A673 (cell line): ENCODE measurements at regions of chr15 and their contacts with region 1.

Region 1: GRCh38 chr15:78638658-78639314 is 2.2 kb downstream of the CHRNB4 start:
- DNase-seq: peak; percentile 68
- H3K4me3 ChIP-seq: no peak overlapping the region
- H3K27ac ChIP-seq: no peak overlapping the region
- H3K4me1 ChIP-seq: no peaks in the 10 kb centered on the region
- H3K27me3 ChIP-seq: peaks cover 72% of the 10 kb centered on the region
- CTCF ChIP-seq: peak; percentile 71

Region 2: GRCh38 chr15:78035321-78035751 is 603.5 kb before region 1 on chr15:
- CTCF ChIA-PET with region 1: no interaction called
- POLR2A ChIA-PET with region 1: no interaction called
- intact Hi-C with region 1: no loop called
- DNase-seq: no peak
- H3K4me3 ChIP-seq: no peak overlapping the region
- H3K27ac ChIP-seq: no peak overlapping the region
- H3K4me1 ChIP-seq: no peaks in the 10 kb centered on the region
- H3K27me3 ChIP-seq: no peaks in the 10 kb centered on the region
- CTCF ChIP-seq: no peak

Region 3: GRCh38 chr15:78469031-78469430 is 169.8 kb before region 1 on chr15:
- CTCF ChIA-PET with region 1: no interaction called
- POLR2A ChIA-PET with region 1: no interaction called
- intact Hi-C with region 1: no loop called
- DNase-seq: no peak
- H3K4me3 ChIP-seq: no peak overlapping the region
- H3K27ac ChIP-seq: no peak overlapping the region
- H3K4me1 ChIP-seq: no peaks in the 10 kb centered on the region
- H3K27me3 ChIP-seq: no peaks in the 10 kb centered on the region
- CTCF ChIP-seq: no peak

Region 4: DNA sequence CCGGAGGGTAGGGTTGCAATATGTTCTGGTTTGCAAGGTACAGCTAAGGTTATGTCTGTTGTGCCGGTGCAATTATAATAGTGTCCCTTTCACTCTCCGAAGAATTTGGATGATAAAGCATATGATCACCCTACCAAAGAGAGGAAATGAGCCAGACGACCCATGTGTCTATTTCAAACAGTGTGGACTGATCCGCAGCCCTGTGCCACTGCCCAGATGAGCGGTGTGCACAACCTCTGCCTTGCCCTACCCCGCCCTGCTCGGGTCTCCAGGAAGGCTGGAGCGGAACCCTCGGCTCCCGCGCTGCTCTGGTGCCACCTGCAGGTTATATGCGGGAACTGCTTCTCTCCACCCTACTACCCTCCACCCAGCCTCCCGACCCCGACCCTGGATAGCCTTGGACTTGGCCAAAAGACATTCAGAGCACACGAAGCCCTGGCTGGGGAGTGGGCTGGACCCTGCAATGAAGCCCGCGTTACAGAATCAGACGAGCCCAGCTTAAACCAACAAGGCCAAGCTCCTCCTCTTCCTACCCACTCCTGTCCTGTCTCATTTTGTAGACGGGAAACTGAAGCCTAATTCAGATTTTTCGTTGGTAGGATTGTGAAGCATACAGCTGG is 70.6 kb after region 1 on chr15:
- CTCF ChIA-PET with region 1: interaction called, 4 read pairs
- POLR2A ChIA-PET with region 1: no interaction called
- intact Hi-C with region 1: loop called (anchors 1 kb)
- DNase-seq: peak; percentile 63
- H3K4me3 ChIP-seq: no peak overlapping the region
- H3K27ac ChIP-seq: no peak overlapping the region
- H3K4me1 ChIP-seq: no peaks in the 10 kb centered on the region
- H3K27me3 ChIP-seq: peaks cover 61% of the 10 kb centered on the region
- CTCF ChIP-seq: peak; percentile 89

Region 5: GRCh38 chr15:78739996-78740903 is 101.5 kb after region 1 on chr15:
- CTCF ChIA-PET with region 1: no interaction called
- POLR2A ChIA-PET with region 1: no interaction called
- intact Hi-C with region 1: loop called (anchors 2 kb)
- DNase-seq: peak; percentile 70
- H3K4me3 ChIP-seq: no peak overlapping the region
- H3K27ac ChIP-seq: no peak overlapping the region
- H3K4me1 ChIP-seq: no peaks in the 10 kb centered on the region
- H3K27me3 ChIP-seq: peaks cover 6% of the 10 kb centered on the region
- CTCF ChIP-seq: peak; percentile 64